HepG2 (cell line): ENCODE measurements at regions of chr13 and their contacts with region 1.

Region 1: GRCh38 chr13:94305463-94305862 is 174.0 kb downstream of the DCT start:
- DNase-seq: no peak
- ATAC-seq: peak; percentile 35; the same call in 2 of the 3 replicates
- H3K4me3 ChIP-seq: no peak overlapping the region
- H3K27ac ChIP-seq: peak overlapping the region; percentile 83
- H3K4me1 ChIP-seq: peaks cover 38% of the 10 kb centered on the region
- H3K27me3 ChIP-seq: no peaks in the 10 kb centered on the region
- CTCF ChIP-seq: no peak
- EP300 ChIP-seq: no peak
- POLR2A ChIP-seq: no peak
- RAD21 ChIP-seq: no peak

Region 2: DNA sequence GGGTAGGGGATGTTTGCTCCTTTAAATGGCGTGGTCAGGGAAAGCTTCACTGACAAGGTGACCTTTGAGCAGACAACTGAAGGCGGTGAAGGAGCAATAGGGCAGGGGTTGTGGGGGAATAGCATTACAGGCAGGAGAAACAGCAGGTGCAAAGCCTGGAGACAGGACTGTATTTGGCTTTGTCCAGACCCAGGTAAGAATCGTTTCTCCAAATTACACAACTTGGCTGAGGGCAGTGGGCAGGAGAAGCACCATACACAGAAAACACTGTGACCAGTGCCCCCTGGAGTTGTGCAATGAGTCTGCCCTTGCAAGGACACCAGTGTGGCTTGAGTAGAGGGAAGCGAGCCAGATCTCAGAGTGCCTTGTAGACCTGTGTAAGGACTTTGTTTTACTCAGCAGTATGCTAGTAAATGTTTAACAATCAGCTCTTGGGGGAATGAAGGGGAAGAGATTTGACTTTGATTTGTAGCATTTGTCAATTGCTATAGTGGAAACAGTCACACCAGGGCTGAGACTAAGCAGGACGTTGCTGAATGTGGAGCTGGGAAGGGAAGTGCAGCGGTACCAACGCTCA is 186.0 kb before region 1 on chr13:
- CTCF ChIA-PET with region 1: no interaction called
- POLR2A ChIA-PET with region 1: interaction called, 13 read pairs
- in situ Hi-C with region 1: no loop called
- intact Hi-C with region 1: no loop called
- DNase-seq: peak; percentile 90
- ATAC-seq: peak; percentile 99
- H3K4me3 ChIP-seq: peak overlapping the region; percentile 19 to 58 (median 26); a peak in 4 of 6 replicates
- H3K27ac ChIP-seq: peak overlapping the region; percentile 90
- H3K4me1 ChIP-seq: peaks cover 31% of the 10 kb centered on the region
- H3K27me3 ChIP-seq: no peaks in the 10 kb centered on the region
- CTCF ChIP-seq: peak; percentile 88
- EP300 ChIP-seq: peak in 1 of 2 experiments; percentile 55; a peak in 1 of 4 replicates
- POLR2A ChIP-seq: peak; percentile 35 to 52; a peak in 1 of 4 replicates
- RAD21 ChIP-seq: peak; percentile 55

Region 3: DNA sequence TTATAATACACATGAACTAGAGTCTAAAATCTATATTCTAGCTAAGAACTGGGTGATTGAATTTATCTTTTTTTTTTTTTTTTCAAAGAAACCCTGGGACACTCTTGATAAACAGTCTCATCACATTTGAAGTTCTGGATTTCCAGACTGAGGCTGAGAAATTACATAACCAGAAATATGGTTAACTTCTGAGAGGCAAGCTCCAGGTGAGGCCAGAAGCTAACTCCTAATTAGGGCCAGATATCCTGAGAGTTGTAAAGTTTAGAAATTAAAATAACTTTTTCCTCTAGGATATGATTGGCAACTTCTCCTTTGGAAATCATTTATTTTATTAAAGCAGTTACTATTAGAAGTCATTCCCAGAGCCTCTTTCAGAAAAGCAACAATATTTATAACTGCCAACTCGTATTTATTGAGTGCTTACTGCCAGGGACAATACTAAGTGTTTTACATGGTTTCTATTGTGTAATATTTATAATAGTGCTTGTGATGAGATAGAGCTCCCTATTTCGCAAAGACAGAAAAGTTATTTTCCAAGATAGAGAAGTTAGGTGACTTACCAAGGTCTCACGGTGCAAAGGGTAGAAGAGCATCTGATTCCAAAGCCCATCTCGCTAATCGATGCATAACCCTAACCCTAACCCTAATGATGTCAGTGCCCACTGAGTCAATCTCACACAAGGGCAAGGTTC is 13.7 kb before region 1 on chr13:
- CTCF ChIA-PET with region 1: no interaction called
- POLR2A ChIA-PET with region 1: interaction called, 64 read pairs
- in situ Hi-C with region 1: no loop called
- intact Hi-C with region 1: loop called (anchors 1 kb)
- DNase-seq: peak; percentile 92
- ATAC-seq: peak; percentile 98
- H3K4me3 ChIP-seq: peak overlapping the region in 1 of 3 experiments; percentile 12; a peak in 2 of 6 replicates
- H3K27ac ChIP-seq: peak overlapping the region; percentile 81
- H3K4me1 ChIP-seq: peaks cover 46% of the 10 kb centered on the region
- H3K27me3 ChIP-seq: no peaks in the 10 kb centered on the region
- CTCF ChIP-seq: no peak
- EP300 ChIP-seq: peak; percentile 89 to 99
- POLR2A ChIP-seq: no peak; a peak in 1 of 4 replicates
- RAD21 ChIP-seq: 0 out of 2 replicates have a peak, but pooled peaks have one; percentile 29

Region 4: DNA sequence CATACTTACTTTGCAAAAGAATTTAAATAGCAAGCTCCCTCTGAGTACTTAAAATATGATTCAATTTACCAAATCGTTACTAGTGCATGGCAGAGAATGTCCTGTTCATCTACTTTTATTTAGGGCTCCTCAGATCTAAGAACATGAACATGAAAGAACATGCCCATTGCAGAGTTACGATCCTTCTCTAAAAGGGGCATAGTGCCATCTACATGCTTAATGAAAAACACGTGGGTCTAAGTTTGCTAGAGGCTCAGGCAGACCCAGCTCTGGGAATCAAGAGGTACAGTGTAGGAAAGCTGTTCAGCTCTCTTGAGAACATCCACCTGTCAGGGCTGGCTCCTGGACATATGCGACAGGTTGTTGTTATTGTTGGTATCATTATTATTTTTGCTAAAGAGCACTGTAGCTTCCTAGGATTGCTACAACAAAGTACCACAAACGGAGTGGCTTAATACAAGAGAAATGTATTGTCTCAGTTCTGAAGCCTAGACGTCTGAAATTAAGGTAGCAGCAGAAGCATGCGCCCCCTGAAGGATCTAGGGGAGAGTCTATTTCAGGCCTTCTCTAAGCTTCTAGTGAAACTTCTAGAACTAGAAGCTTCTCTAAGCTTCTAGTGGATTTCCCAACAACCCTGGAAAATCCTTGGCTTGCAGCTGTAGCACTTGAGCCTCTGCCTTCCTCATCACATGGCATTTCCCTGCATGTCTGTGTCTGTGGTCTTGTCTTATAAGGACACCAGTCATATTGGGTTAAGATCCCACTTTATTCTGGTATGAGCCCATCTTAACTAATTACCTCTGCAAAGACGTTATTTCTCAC is 40.1 kb after region 1 on chr13:
- CTCF ChIA-PET with region 1: no interaction called
- POLR2A ChIA-PET with region 1: no interaction called
- in situ Hi-C with region 1: no loop called
- intact Hi-C with region 1: no loop called
- DNase-seq: peak; percentile 22
- ATAC-seq: peak; percentile 65
- H3K4me3 ChIP-seq: no peak overlapping the region
- H3K27ac ChIP-seq: no peak overlapping the region
- H3K4me1 ChIP-seq: peaks cover 22% of the 10 kb centered on the region
- H3K27me3 ChIP-seq: no peaks in the 10 kb centered on the region
- CTCF ChIP-seq: peak; percentile 59
- EP300 ChIP-seq: no peak
- POLR2A ChIP-seq: no peak
- RAD21 ChIP-seq: peak; percentile 23; the same call in 1 of the 2 replicates